ENCODE measurements at regions of chr1 and their contacts with region 1.

Region 1: GRCh38 chr1:32005522-32005921 is 8.1 kb upstream of the KHDRBS1 start:
- DNase-seq: no peak
- H3K4me3 ChIP-seq: no peak overlapping the region
- H3K27ac ChIP-seq: no peak overlapping the region
- H3K4me1 ChIP-seq: peaks cover 9% of the 10 kb centered on the region; the same call in 1 of the 2 replicates
- H3K27me3 ChIP-seq: peaks cover 6% of the 10 kb centered on the region; the same call in 1 of the 2 replicates
- CTCF ChIP-seq: no peak

Region 2: GRCh38 chr1:31831397-31832378 is 173.8 kb before region 1 on chr1:
- CTCF ChIA-PET with region 1: no interaction called
- POLR2A ChIA-PET with region 1: no interaction called
- intact Hi-C with region 1: no loop called
- DNase-seq: no peak
- H3K4me3 ChIP-seq: no peak overlapping the region
- H3K27ac ChIP-seq: no peak overlapping the region
- H3K4me1 ChIP-seq: no peaks in the 10 kb centered on the region
- H3K27me3 ChIP-seq: peaks cover 5% of the 10 kb centered on the region; the same call in 1 of the 2 replicates
- CTCF ChIP-seq: no peak

Region 3: DNA sequence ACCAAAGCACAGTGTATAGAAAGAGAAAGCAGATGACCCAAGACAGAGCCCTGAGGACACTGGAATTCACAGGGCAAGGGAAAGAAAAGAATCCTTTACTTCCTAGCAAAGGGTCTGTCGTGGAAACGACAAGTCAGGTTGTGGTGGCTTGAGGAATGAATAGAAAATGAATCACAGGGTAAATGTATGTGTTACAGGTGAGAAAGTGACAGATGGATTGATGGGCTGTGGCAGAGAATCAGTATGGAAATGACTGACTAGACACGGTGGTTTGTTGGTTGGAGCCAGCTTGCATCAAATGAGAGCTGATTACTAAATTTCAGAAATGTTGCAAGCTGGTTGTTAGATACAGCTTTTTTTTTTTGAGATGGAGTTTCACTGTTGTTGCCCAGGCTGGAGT is 114.2 kb before region 1 on chr1:
- CTCF ChIA-PET with region 1: interaction called, 10 read pairs
- POLR2A ChIA-PET with region 1: no interaction called
- intact Hi-C with region 1: no loop called
- DNase-seq: peak in 1 of 2 experiments; percentile 65
- H3K4me3 ChIP-seq: no peak overlapping the region
- H3K27ac ChIP-seq: no peak overlapping the region
- H3K4me1 ChIP-seq: no peaks in the 10 kb centered on the region
- H3K27me3 ChIP-seq: no peaks in the 10 kb centered on the region
- CTCF ChIP-seq: no peak

Region 4: GRCh38 chr1:32221980-32222755 is 216.6 kb after region 1 on chr1 and contains the starts of genes EIF3I and TMEM234:
- CTCF ChIA-PET with region 1: no interaction called
- POLR2A ChIA-PET with region 1: no interaction called
- intact Hi-C with region 1: no loop called
- DNase-seq: peak; percentile 87 to 88
- H3K4me3 ChIP-seq: peak within 1 kb of the TSS; percentile 85
- H3K27ac ChIP-seq: peak within 1 kb of the TSS; percentile 59
- H3K4me1 ChIP-seq: peaks cover 25% of the 10 kb centered on the region
- H3K27me3 ChIP-seq: no peaks in the 10 kb centered on the region
- CTCF ChIP-seq: no peak
- total RNA-seq, gene EIF3I: 199 and 229 TPM in 2 replicates
- total RNA-seq, gene TMEM234: 14.1 and 18.1 TPM in 2 replicates

Measured in PC-9 (cell line).